Stomach (tissue), 19 donors: ENCODE measurements at regions of chr5 and their contacts with region 1.

Region 1: GRCh38 chr5:137778772-137779564 is 24.8 kb upstream of the HNRNPA0 start:
- DNase-seq: peak in 1 of 2 donors; percentile 67
- H3K4me3 ChIP-seq: no peak overlapping the region
- H3K27ac ChIP-seq: no peak overlapping the region
- H3K4me1 ChIP-seq: no peaks in the 10 kb centered on the region
- H3K27me3 ChIP-seq: no peaks in the 10 kb centered on the region
- CTCF ChIP-seq: peak in 5 of 7 experiments; percentile 49 to 71 (median 65)
- EP300 ChIP-seq: no peak
- POLR2A ChIP-seq: no peak

Region 2: GRCh38 chr5:136529081-136529480 is 1249.9 kb before region 1 on chr5:
- intact Hi-C with region 1: no loop called
- DNase-seq: no peak
- H3K4me3 ChIP-seq: no peak overlapping the region
- H3K27ac ChIP-seq: no peak overlapping the region
- H3K4me1 ChIP-seq: no peaks in the 10 kb centered on the region
- H3K27me3 ChIP-seq: no peaks in the 10 kb centered on the region
- CTCF ChIP-seq: no peak
- EP300 ChIP-seq: no peak
- POLR2A ChIP-seq: no peak

Region 3: DNA sequence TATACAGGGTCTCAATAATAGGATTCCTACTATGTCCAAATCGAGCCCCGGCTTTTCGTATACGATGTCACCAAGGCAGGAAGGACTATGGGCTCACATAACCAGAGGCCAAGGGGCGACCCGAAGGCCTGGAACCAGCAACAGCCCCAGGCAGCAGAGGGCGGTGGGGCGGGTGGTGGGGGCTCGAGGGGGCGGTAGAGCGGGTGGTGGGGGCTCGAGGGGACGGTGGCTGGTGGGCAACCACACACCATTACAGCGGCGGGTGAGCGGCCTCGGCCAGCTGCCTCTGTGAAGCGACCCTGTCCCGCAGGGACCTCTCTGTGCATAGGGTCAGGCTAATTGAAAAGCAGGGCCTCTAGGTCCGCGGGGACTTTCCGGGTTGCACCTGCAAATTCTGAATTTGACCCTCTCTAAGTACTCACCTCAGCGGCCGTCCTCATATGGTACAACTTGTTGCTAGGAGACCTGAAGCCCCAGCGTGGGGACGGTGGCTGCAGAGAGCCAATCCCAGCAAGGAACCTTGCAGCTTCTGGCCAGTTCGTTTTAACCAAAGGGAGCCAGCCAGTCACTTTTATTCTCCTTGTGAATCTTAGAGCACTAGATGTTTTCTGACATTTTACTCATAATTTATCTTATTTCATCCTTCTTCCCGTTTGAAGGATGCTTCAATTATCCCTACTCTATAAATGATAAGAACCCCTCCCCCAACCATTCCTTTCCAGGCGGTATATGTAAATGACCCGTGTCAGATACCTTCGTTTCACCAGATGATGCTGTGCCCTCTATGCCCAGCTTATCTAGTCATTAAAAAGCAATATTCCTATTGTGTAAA is 360.2 kb after region 1 on chr5 and contains the start of gene NME5:
- intact Hi-C with region 1: loop called (anchors 10 kb)
- DNase-seq: peak; percentile 75 to 90
- H3K4me3 ChIP-seq: peak within 1 kb of the TSS; percentile 59 to 83 (median 64)
- H3K27ac ChIP-seq: peak within 1 kb of the TSS in 1 of 5 donors; percentile 12
- H3K4me1 ChIP-seq: peaks cover 0 to 16% (median 9%) of the 10 kb centered on the region in 4 donors
- H3K27me3 ChIP-seq: peaks cover 0 to 8% (median 0%) of the 10 kb centered on the region in 3 donors
- CTCF ChIP-seq: no peak
- EP300 ChIP-seq: no peak
- POLR2A ChIP-seq: no peak
- total RNA-seq, gene NME5: 1.5 to 2.3 TPM in 2 of 5 donors, not detected in the others